ENCODE measurements at regions of chr6 and their contacts with region 1.

Region 1: GRCh38 chr6:28981833-28982475 is 23.2 kb downstream of the ZNF311 start:
- DNase-seq: peak; percentile 83 to 94 (median 83)
- ATAC-seq: peak; percentile 64
- H3K4me3 ChIP-seq: peak overlapping the region; percentile 56
- H3K27ac ChIP-seq: peak overlapping the region; percentile 97
- H3K4me1 ChIP-seq: peaks cover 24 to 30% of the 10 kb centered on the region in 2 experiments
- H3K27me3 ChIP-seq: no peaks in the 10 kb centered on the region
- CTCF ChIP-seq: peak; percentile 35 to 63 (median 48); a peak in 5 of 6 replicates
- EP300 ChIP-seq: peak; percentile 79
- POLR2A ChIP-seq: no peak
- RAD21 ChIP-seq: peak; percentile 36 to 63; a peak in 3 of 4 replicates

Region 2: DNA sequence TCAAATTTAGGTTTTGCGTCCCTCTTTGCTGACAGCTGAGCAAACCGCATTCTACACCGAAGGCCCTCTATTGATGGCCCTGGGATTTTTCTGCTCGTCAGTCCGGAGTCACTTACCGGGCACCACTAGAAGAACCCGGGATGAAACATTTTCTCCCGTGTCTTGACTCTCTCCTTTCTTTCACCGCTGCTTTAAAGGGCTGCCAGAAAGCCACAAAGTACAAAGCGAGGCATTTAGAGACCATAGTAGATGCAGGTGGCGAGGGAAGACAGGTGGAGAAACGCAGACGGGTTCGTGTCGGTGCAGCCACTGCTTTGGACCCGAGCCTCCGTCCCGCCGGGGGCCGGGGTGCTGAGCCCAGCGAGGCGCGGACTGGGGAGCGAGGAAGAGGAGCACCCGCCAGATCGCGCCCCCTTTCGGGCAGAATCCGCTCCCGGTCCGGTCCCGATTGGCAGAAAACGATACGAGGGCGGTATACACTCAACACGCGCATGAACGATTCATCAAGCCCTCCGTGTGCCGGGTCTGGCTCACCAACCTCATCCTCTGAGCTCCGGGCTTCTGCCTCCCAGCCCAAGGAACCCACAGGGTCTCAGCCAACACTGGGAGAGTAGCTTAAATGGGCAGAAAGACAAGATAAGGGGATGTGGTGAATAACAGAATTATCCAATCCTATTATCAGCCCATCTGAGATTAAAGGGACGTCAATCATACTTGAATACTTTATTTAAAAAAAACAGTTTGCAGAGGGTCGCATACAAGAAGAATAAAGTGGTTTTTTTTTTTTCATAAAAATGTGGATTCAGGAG is 143.1 kb before region 1 on chr6:
- CTCF ChIA-PET with region 1: interaction called, 8 read pairs
- POLR2A ChIA-PET with region 1: interaction called, 9 read pairs
- in situ Hi-C with region 1: no loop called
- intact Hi-C with region 1: loop called (anchors 1 kb)
- DNase-seq: peak; percentile 90 to 96 (median 92)
- ATAC-seq: peak; percentile 94
- H3K4me3 ChIP-seq: peak overlapping the region; percentile 74
- H3K27ac ChIP-seq: peak overlapping the region; percentile 86
- H3K4me1 ChIP-seq: peaks cover 0 to 8% of the 10 kb centered on the region in 2 experiments; a peak in 2 of 5 replicates
- H3K27me3 ChIP-seq: no peaks in the 10 kb centered on the region
- CTCF ChIP-seq: peak; percentile 84 to 93 (median 88)
- EP300 ChIP-seq: no peak; the same call in 1 of the 2 replicates
- POLR2A ChIP-seq: peak; percentile 80
- RAD21 ChIP-seq: peak; percentile 69 to 73

Region 3: GRCh38 chr6:28895134-28895812 is 86.7 kb before region 1 on chr6:
- CTCF ChIA-PET with region 1: no interaction called
- POLR2A ChIA-PET with region 1: interaction called, 7 read pairs
- in situ Hi-C with region 1: no loop called
- intact Hi-C with region 1: loop called (anchors 1 kb)
- DNase-seq: peak; percentile 79 to 99 (median 88)
- ATAC-seq: peak; percentile 84
- H3K4me3 ChIP-seq: peak overlapping the region; percentile 49
- H3K27ac ChIP-seq: peak overlapping the region; percentile 98
- H3K4me1 ChIP-seq: peaks cover 14 to 15% of the 10 kb centered on the region in 2 experiments; a peak in 4 of 5 replicates
- H3K27me3 ChIP-seq: no peaks in the 10 kb centered on the region
- CTCF ChIP-seq: no peak
- EP300 ChIP-seq: no peak
- POLR2A ChIP-seq: peak; percentile 96
- RAD21 ChIP-seq: no peak

Region 4: DNA sequence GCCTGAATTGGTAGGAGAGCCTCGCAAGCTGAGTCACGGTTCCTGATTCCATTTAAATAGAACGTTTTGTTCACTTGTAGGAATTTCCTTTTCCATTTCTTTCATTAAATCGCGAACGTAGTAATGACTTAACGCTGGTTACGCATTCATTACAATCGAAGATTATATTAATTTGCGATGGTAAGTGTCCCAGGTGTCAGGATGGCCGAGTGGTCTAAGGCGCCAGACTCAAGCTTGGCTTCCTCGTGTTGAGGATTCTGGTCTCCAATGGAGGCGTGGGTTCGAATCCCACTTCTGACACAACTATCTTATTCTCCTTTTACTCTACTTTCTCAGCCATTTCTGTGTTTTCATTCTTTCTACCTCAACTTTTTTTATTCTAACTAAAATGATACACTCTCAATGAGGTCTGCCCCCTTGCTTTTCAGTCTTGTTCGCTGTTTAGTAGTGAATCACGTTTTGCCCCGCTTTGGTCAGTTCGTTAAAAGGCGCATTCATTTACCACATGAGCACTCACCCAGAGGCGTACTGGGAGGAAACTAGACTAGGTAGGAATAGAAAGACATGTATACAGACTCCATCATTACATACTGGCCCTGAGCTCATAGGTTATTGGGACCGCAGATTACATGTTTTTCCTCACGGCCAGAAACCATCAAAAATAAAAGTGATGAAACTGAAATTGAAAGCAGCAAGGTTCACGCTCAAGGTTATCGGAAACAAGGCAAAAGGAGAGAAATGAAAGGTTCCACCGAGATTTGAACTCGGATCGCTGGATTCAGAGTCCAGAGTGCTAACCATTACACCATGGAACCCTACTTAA is 40.9 kb before region 1 on chr6:
- CTCF ChIA-PET with region 1: interaction called, 12 read pairs
- POLR2A ChIA-PET with region 1: interaction called, 21 read pairs
- in situ Hi-C with region 1: loop called (anchors 5 kb)
- intact Hi-C with region 1: loop called (anchors 1 kb)
- DNase-seq: peak; percentile 62 to 94 (median 68)
- ATAC-seq: peak; percentile 82
- H3K4me3 ChIP-seq: peak overlapping the region; percentile 64
- H3K27ac ChIP-seq: peak overlapping the region; percentile 91
- H3K4me1 ChIP-seq: peaks cover 3 to 20% of the 10 kb centered on the region in 2 experiments; a peak in 3 of 5 replicates
- H3K27me3 ChIP-seq: no peaks in the 10 kb centered on the region
- CTCF ChIP-seq: no peak; a peak in 2 of 6 replicates
- EP300 ChIP-seq: peak; percentile 88
- POLR2A ChIP-seq: no peak
- RAD21 ChIP-seq: peak in 1 of 2 experiments; percentile 52; a peak in 2 of 4 replicates

Region 5: DNA sequence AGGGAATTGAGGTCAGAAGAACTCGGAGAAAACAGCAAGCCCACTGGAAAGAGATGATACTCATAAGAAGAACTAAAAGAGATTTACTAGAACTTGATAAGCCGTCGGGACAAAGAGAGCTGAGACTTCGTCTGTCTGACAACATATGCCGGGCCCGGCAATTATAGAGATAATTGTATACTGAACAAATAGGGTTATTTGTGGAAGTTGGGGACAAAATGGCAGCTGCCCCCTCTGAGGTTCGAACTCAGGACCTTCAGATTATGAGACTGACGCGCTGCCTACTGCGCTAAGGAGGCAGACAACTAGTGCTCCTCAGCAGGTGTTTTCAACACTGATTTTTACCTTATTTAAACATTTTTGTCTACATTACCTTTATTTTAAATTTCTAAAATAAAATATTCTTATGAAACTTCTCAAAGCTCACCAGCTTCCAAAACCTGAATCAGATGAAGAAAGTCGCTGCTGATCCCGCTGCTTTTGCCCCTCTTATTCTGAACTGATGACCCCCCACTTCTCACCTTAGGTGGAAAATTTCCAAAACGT is 28.8 kb before region 1 on chr6:
- CTCF ChIA-PET with region 1: interaction called, 4 read pairs
- POLR2A ChIA-PET with region 1: interaction called, 21 read pairs
- in situ Hi-C with region 1: loop called (anchors 5 kb)
- intact Hi-C with region 1: loop called (anchors 1 kb)
- DNase-seq: peak; percentile 78 to 92 (median 84)
- ATAC-seq: peak; percentile 80
- H3K4me3 ChIP-seq: peak overlapping the region; percentile 43
- H3K27ac ChIP-seq: peak overlapping the region; percentile 76
- H3K4me1 ChIP-seq: peaks cover 22 to 33% of the 10 kb centered on the region in 2 experiments
- H3K27me3 ChIP-seq: no peaks in the 10 kb centered on the region
- CTCF ChIP-seq: no peak
- EP300 ChIP-seq: peak; percentile 82
- POLR2A ChIP-seq: no peak
- RAD21 ChIP-seq: no peak

Region 6: DNA sequence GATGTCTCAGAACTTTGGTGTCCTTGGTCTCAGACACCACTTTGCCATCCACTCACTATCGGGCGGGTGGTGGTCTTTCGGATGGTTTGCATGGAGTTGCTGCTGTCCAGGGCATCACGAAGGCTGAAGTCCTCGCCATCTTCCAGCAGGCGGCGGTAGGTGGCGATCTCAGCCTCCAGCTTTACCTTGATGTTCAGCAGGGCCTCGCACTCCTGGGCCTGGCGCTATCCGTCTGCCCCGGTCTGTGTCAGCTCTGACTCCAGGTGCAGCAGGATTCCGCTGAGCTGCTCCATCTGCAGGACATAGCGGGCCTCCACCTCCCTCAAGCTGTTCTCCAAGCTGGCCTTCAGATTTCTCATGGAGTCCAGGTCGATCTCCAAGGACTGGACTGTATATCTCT is 12.8 kb before region 1 on chr6:
- CTCF ChIA-PET with region 1: no interaction called
- POLR2A ChIA-PET with region 1: interaction called, 17 read pairs
- in situ Hi-C with region 1: no loop called
- intact Hi-C with region 1: no loop called
- DNase-seq: no peak
- ATAC-seq: no peak
- H3K4me3 ChIP-seq: no peak overlapping the region
- H3K27ac ChIP-seq: no peak overlapping the region
- H3K4me1 ChIP-seq: peaks cover 1 to 7% of the 10 kb centered on the region in 2 experiments; a peak in 4 of 5 replicates
- H3K27me3 ChIP-seq: no peaks in the 10 kb centered on the region
- CTCF ChIP-seq: no peak
- EP300 ChIP-seq: no peak
- POLR2A ChIP-seq: no peak
- RAD21 ChIP-seq: no peak

Region 7: GRCh38 chr6:29005183-29005885 is 23.4 kb after region 1 on chr6 and contains the start of gene ZNF311:
- CTCF ChIA-PET with region 1: interaction called, 3 read pairs
- POLR2A ChIA-PET with region 1: interaction called, 11 read pairs
- in situ Hi-C with region 1: no loop called
- intact Hi-C with region 1: no loop called
- DNase-seq: peak; percentile 61 to 97 (median 78)
- ATAC-seq: peak; percentile 99
- H3K4me3 ChIP-seq: peak within 1 kb of the TSS; percentile 45
- H3K27ac ChIP-seq: peak within 1 kb of the TSS; percentile 70
- H3K4me1 ChIP-seq: peaks cover 10 to 20% of the 10 kb centered on the region in 2 experiments; a peak in 4 of 5 replicates
- H3K27me3 ChIP-seq: no peaks in the 10 kb centered on the region
- CTCF ChIP-seq: no peak
- EP300 ChIP-seq: peak; percentile 30; the same call in 1 of the 2 replicates
- POLR2A ChIP-seq: peak; percentile 95
- RAD21 ChIP-seq: no peak
- polyA plus RNA-seq, gene ZNF311: 5.1 to 10.0 TPM

Region 8: DNA sequence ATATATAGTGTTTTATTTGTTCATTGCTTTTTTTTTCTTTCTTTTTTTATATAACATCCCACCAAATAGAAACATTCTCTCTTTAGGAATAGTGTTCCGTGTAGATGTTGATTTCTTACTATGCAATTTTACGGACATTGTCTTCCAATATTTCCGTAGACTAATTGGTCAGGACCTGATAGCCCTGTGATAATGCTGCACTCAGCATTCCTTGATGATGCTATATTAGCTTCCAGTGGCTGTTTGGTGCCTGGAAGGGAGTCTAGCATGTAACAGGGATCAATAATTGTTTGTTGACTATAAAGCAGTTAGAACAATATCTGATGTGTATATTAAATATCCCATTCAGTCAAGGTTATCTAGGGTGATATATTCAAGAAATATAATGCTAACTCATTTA is 69.7 kb after region 1 on chr6:
- CTCF ChIA-PET with region 1: no interaction called
- POLR2A ChIA-PET with region 1: no interaction called
- in situ Hi-C with region 1: no loop called
- intact Hi-C with region 1: no loop called
- DNase-seq: no peak
- ATAC-seq: no peak
- H3K4me3 ChIP-seq: no peak overlapping the region
- H3K27ac ChIP-seq: no peak overlapping the region
- H3K4me1 ChIP-seq: no peaks in the 10 kb centered on the region
- H3K27me3 ChIP-seq: peaks cover 2 to 8% of the 10 kb centered on the region in 2 experiments; a peak in 3 of 5 replicates
- CTCF ChIP-seq: no peak
- EP300 ChIP-seq: no peak
- POLR2A ChIP-seq: no peak
- RAD21 ChIP-seq: no peak